H1 (cell line): ENCODE measurements at regions of chr12 and their contacts with region 1.

Region 1: GRCh38 chr12:2944401-2945047 is 14.7 kb upstream of the TEAD4 start:
- DNase-seq: peak; percentile 71 to 94
- H3K4me3 ChIP-seq: no peak overlapping the region
- H3K27ac ChIP-seq: no peak overlapping the region
- H3K4me1 ChIP-seq: no peaks in the 10 kb centered on the region
- H3K27me3 ChIP-seq: no peaks in the 10 kb centered on the region; a peak in 1 of 7 replicates
- CTCF ChIP-seq: peak; percentile 93 to 100 (median 98)
- EP300 ChIP-seq: no peak
- POLR2A ChIP-seq: no peak
- RAD21 ChIP-seq: peak; percentile 97 to 98

Region 2: DNA sequence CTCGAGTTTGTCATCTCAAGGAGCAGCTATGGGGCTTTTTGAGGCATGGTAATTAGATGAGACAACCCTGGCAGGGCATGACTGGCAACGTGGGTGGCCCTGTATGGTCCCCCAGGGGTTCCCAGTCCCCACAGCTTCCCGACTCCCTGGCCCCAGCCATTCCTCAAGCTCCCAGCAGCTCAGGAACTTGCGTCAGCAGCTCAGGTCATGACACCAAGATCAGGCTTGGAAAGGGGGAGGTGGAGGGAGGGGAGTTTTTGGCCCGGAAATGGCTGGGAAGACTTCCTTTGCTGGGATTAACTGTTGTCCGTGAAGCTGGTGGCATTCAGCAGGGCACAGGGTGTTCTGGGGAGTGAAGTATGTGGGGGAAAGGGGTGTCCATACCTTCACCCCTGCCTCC is 99.2 kb before region 1 on chr12:
- CTCF ChIA-PET with region 1: interaction called, 54 read pairs
- POLR2A ChIA-PET with region 1: no interaction called
- DNase-seq: no peak
- H3K4me3 ChIP-seq: no peak overlapping the region
- H3K27ac ChIP-seq: no peak overlapping the region
- H3K4me1 ChIP-seq: peaks cover 0 to 4% (median 3%) of the 10 kb centered on the region in 4 experiments; a peak in 6 of 7 replicates
- H3K27me3 ChIP-seq: no peaks in the 10 kb centered on the region
- CTCF ChIP-seq: no peak
- EP300 ChIP-seq: no peak
- POLR2A ChIP-seq: no peak
- RAD21 ChIP-seq: no peak

Region 3: GRCh38 chr12:2877047-2877952 is 67.2 kb before region 1 on chr12 and contains the starts of genes FOXM1 and RHNO1:
- CTCF ChIA-PET with region 1: interaction called, 143 read pairs
- POLR2A ChIA-PET with region 1: interaction called, 14 read pairs
- DNase-seq: peak; percentile 74 to 94
- H3K4me3 ChIP-seq: peak within 1 kb of the TSS; percentile 92 to 100 (median 98)
- H3K27ac ChIP-seq: peak within 1 kb of the TSS; percentile 86
- H3K4me1 ChIP-seq: peaks cover 0 to 4% (median 3%) of the 10 kb centered on the region in 4 experiments; a peak in 4 of 7 replicates
- H3K27me3 ChIP-seq: no peaks in the 10 kb centered on the region
- CTCF ChIP-seq: no peak
- EP300 ChIP-seq: no peak
- POLR2A ChIP-seq: peak in 1 of 2 experiments; percentile 81; a peak in 2 of 3 replicates
- RAD21 ChIP-seq: no peak
- total RNA-seq, gene FOXM1: 118 and 121 TPM in 2 replicates
- total RNA-seq, gene RHNO1: 41.9 and 55.8 TPM in 2 replicates

Region 4: DNA sequence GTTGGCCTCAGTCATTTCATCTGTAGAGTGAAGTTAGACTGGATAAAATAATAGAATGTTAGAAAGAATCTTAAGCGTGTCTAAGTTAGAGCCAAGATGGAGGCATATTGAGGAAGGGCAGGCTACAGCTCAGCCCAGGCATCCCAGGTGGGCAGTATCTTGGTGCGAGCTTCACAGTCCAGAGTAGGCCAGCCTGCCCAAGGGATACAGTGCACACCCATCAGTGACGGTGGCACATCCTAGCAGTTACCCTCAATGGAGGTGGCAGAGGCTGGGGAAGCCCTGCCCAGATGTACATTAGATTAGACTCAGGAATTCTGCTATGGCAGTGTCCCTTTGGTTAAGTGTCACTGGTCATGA is 32.3 kb before region 1 on chr12:
- CTCF ChIA-PET with region 1: interaction called, 19 read pairs
- POLR2A ChIA-PET with region 1: no interaction called
- DNase-seq: no peak
- H3K4me3 ChIP-seq: no peak overlapping the region
- H3K27ac ChIP-seq: peak overlapping the region; percentile 77
- H3K4me1 ChIP-seq: peaks cover 1 to 7% (median 5%) of the 10 kb centered on the region in 4 experiments; a peak in 4 of 7 replicates
- H3K27me3 ChIP-seq: no peaks in the 10 kb centered on the region
- CTCF ChIP-seq: no peak
- EP300 ChIP-seq: no peak
- POLR2A ChIP-seq: no peak; a peak in 1 of 3 replicates
- RAD21 ChIP-seq: no peak

Region 5: DNA sequence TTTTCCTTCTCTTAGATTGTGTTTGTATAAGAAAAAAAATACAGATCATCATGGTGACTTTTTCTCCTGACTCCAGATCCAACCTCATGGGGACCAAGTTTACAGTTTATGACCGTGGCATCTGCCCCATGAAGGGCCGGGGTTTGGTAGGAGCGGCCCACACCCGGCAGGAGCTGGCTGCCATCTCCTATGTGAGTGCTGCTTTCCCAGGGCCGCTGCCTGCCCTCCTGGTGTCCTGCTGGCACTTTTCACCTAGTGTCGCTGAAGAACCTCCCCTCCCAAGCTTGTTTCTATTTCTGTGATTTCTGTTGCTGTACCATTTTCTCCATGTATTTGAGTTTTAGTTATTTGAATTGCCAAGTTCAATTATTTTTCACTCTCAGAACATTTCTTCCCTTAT is 10.2 kb before region 1 on chr12:
- CTCF ChIA-PET with region 1: interaction called, 21 read pairs
- POLR2A ChIA-PET with region 1: interaction called, 3 read pairs
- DNase-seq: no peak
- H3K4me3 ChIP-seq: no peak overlapping the region
- H3K27ac ChIP-seq: no peak overlapping the region
- H3K4me1 ChIP-seq: no peaks in the 10 kb centered on the region
- H3K27me3 ChIP-seq: no peaks in the 10 kb centered on the region
- CTCF ChIP-seq: no peak
- EP300 ChIP-seq: no peak
- POLR2A ChIP-seq: no peak
- RAD21 ChIP-seq: no peak

Region 6: GRCh38 chr12:3004655-3005565 is 60.4 kb after region 1 on chr12:
- CTCF ChIA-PET with region 1: interaction called, 21 read pairs
- POLR2A ChIA-PET with region 1: no interaction called
- DNase-seq: no peak
- H3K4me3 ChIP-seq: no peak overlapping the region
- H3K27ac ChIP-seq: no peak overlapping the region
- H3K4me1 ChIP-seq: peaks cover 0 to 9% (median 6%) of the 10 kb centered on the region in 4 experiments; a peak in 5 of 7 replicates
- H3K27me3 ChIP-seq: no peaks in the 10 kb centered on the region
- CTCF ChIP-seq: peak; percentile 45 to 73 (median 58)
- EP300 ChIP-seq: no peak
- POLR2A ChIP-seq: no peak
- RAD21 ChIP-seq: peak; percentile 12 to 41; a peak in 2 of 4 replicates